ENCODE measurements at regions of chr6 and their contacts with region 1.

Region 1: GRCh38 chr6:122696079-122696478 is 83.4 kb upstream of the FABP7 start:
- DNase-seq: no peak
- CTCF ChIP-seq: no peak

Region 2: GRCh38 chr6:122683989-122684651 is 12.0 kb before region 1 on chr6:
- CTCF ChIA-PET with region 1: interaction called, 13 read pairs
- POLR2A ChIA-PET with region 1: no interaction called
- DNase-seq: no peak
- CTCF ChIP-seq: no peak